A549 (cell line): ENCODE measurements at regions of chr9 and their contacts with region 1.

Region 1: DNA sequence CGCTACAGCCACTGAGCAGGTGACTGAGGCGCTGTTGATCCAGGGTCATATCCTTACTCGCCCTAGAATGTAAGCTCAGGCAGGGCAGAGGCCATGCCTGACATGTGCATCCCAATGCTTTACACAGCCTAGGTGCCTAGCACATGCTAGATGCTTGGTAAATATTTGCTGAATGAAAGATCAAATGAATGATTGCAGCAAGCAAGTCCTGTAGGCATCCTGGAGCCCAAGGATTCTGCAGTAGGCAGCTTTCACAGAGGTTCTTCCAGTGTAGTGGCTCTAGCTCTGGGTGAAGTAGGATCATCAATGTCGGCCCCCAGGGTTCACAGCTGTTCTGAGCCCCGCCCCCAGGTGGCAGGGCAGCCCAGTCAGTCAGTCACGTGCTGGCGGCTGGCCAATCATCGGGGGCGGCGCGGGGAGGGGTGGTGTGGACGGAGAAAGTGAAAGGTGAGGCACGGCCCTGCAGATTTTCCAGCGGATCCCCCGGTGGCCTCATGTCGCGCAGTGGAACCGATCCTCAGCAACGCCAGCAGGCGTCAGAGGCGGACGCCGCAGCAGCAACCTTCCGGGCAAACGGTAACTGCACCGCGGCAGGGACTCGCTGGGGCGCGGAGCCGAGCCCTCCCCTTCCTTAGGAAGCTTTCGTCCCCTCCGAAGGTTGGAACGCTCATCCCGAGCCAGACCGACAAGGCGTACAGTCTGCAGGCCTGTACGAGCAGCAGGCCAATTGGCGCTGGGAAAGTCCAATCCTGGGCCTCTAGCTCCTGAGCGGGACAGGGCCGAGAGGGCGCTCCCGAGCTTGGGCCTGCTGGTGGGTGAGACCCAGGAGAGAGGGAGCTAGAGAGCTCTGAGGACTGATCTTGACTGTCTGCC is at the start of gene GALT:
- DNase-seq: peak; percentile 84 to 97
- ATAC-seq: peak; percentile 86 to 91
- H3K4me3 ChIP-seq: peak within 1 kb of the TSS; percentile 60
- H3K27ac ChIP-seq: peak within 1 kb of the TSS; percentile 80 to 94
- H3K4me1 ChIP-seq: peaks cover 32% of the 10 kb centered on the region
- CTCF ChIP-seq: peak; percentile 58
- EP300 ChIP-seq: no peak
- POLR2A ChIP-seq: peak; percentile 61
- RAD21 ChIP-seq: no peak
- polyA plus RNA-seq, gene GALT: 19.0 and 24.4 TPM in 2 replicates

Region 2: DNA sequence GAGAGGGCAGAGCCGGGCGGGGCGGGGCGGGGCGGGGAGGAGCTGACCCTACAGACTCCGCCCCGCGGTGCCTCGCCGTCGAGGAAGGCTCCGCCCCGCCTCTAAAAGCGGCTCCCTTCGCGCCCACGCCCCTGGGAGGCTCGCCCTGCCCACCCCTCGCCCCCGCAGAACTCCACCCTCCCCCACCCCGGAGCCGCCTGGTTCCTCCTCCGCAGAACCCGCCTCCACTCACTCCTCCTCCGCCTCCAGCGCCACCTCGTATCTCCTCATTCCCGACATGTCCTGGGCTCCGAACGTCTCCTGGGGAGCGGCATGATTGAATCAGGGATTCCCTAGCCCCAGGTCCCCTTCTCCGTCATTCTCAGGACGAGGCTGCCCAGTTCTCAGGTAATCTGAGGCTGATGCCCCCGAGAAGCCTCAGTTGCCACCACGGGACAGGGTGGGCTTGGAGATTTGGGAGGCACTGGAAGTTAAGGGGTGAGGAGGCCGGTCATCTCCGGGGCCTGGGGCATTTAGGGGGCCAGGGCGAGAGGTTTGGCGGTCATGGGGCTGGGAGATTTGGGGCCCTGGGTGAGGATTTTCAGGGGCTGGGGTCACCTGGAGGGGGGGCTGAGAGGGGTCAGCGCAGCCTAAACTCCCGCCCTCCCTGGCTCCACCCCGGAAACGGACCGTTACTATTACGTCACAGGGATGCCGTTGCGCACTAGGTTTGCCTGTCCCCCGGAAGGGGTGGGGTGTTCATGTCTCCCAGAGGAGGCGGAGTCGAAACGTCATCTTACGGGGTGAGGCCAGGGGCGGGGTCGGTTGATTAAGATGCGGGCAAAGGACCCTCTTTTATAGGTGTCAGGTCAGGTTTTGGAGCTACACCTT is 19.2 kb after region 1 on chr9:
- CTCF ChIA-PET with region 1: interaction called, 288 read pairs
- POLR2A ChIA-PET with region 1: interaction called, 6 read pairs
- DNase-seq: peak; percentile 95 to 99
- ATAC-seq: peak; percentile 79 to 86
- H3K4me3 ChIP-seq: peak overlapping the region; percentile 93
- H3K27ac ChIP-seq: peak overlapping the region; percentile 96 to 97
- H3K4me1 ChIP-seq: peaks cover 8% of the 10 kb centered on the region
- CTCF ChIP-seq: no peak
- EP300 ChIP-seq: no peak
- POLR2A ChIP-seq: peak; percentile 47
- RAD21 ChIP-seq: no peak